Lower lobe of right lung (tissue), 2 donors: ENCODE measurements at regions of chr14 and their contacts with region 1.

Region 1: GRCh38 chr14:51780006-51780692 is 80.3 kb upstream of the GNG2 start:
- DNase-seq: peak; percentile 66
- ATAC-seq: peak; percentile 75 to 82
- H3K4me3 ChIP-seq: no peak overlapping the region
- H3K27ac ChIP-seq: no peak overlapping the region
- H3K4me1 ChIP-seq: peaks cover 12% of the 10 kb centered on the region
- H3K27me3 ChIP-seq: no peaks in the 10 kb centered on the region
- CTCF ChIP-seq: peak; percentile 88

Region 2: DNA sequence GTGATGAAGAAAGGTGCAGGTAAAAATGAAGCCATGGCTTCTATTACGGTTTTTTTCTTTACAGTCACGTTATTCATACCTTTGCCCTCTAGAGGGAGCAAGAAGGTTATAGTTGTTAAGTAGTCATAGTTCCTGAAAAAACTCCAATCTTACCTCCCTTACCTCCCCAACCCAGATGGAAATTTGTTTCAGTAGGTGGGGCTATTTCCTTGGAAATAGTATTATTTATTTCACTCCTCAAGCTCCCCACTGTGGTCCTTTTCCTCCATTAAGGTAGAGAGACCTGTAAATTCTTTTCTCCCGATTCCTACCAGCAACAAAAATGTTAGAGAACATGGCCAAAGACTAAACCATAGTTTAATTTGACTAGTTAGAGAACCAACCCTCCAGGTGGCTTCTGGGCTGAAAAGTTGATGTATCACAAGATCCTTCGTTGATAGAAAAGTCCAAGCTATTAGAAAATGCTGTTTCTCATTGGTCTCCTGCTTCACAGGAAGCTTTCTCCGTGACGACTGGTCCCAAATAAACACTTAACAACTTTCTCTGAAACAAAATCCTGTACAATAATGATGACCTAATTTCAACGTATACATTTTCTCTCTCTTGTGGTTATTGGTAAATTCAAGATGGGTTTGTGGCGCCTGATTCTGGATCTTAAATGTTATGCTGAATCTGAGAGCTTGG is 496.6 kb before region 1 on chr14:
- intact Hi-C with region 1: loop called (anchors 5 kb)
- DNase-seq: no peak
- ATAC-seq: peak; percentile 78 to 81
- H3K4me3 ChIP-seq: no peak overlapping the region
- H3K27ac ChIP-seq: no peak overlapping the region
- H3K4me1 ChIP-seq: no peaks in the 10 kb centered on the region
- H3K27me3 ChIP-seq: no peaks in the 10 kb centered on the region
- CTCF ChIP-seq: peak; percentile 78